HEK293T (cell line): ENCODE measurements at regions of chr13 and their contacts with region 1.

Region 1: DNA sequence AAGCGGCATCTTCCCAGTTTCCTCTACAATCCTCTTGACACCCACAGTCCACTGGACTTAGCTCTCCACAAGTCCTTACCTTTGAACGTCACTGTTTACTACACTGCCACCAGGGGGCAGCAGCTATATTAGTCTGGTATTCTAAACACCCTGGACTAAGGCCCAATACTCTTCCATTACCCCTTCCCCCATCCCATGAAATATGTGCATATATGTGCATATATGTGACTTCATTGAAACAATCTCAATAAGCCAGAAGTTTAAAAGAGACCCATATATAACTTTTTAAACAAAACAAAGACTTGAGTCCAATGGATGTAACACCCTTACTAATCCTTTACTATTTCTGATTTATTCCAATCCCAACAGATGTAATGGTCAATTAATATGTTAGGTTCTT is 15.5 kb downstream of the GGACT start:
- DNase-seq: peak; percentile 67

Region 2: DNA sequence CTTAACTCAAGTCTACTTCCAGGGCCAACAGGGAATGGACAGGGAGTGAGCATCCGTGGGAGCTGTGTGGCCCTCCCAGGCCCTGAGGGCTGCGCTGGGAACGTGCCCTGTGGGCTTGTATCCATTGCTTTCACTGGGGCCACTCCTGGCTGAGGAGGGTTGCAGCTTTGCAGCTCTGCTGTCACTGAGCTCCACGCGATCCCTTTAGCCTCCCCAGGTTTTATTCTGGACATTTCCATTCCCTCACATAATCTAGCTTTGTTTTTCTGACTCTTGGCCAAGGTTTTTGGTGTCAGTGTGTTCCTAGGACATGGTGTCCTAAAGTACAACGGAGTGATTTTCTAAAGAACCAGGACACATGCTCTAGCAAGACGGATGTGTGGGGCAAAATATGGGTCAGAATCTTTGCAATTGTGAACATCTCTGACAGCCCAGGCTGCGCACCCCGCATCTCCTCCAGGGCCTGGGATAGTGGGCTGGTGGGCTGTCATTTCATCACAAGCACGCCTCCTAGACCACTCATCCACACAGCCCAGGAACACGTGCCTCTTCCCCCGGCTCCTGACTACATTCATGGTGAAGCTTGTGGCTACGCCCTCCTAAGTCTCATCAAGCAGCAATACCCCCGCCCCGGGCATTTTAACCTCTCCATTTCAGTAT is 12.5 kb before region 1 on chr13:
- CTCF ChIA-PET with region 1: interaction called, 13 read pairs
- POLR2A ChIA-PET with region 1: no interaction called
- DNase-seq: no peak

Region 3: DNA sequence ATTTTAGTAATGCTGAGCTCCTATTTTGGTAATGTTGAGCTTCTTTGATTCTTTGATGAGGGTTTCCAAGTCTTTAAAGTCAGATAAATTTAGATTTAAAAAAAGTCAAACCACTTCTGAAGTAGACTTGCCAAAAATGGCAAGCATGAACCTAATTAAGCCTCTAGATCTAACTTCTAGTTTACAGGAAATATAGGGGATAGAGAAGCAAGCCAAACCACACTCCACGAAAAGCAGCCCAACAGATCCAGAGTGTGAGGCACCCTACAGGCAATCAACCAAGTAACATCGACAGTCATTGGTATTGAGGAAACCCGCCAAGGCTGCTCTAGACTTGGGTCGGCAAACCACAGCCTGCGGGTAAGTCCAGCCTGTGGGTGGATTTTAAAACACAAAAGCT is 11.8 kb after region 1 on chr13:
- CTCF ChIA-PET with region 1: interaction called, 10 read pairs
- POLR2A ChIA-PET with region 1: no interaction called
- DNase-seq: no peak

Region 4: GRCh38 chr13:100808330-100809266 is 235.5 kb after region 1 on chr13:
- CTCF ChIA-PET with region 1: no interaction called
- POLR2A ChIA-PET with region 1: no interaction called
- DNase-seq: no peak

Region 5: DNA sequence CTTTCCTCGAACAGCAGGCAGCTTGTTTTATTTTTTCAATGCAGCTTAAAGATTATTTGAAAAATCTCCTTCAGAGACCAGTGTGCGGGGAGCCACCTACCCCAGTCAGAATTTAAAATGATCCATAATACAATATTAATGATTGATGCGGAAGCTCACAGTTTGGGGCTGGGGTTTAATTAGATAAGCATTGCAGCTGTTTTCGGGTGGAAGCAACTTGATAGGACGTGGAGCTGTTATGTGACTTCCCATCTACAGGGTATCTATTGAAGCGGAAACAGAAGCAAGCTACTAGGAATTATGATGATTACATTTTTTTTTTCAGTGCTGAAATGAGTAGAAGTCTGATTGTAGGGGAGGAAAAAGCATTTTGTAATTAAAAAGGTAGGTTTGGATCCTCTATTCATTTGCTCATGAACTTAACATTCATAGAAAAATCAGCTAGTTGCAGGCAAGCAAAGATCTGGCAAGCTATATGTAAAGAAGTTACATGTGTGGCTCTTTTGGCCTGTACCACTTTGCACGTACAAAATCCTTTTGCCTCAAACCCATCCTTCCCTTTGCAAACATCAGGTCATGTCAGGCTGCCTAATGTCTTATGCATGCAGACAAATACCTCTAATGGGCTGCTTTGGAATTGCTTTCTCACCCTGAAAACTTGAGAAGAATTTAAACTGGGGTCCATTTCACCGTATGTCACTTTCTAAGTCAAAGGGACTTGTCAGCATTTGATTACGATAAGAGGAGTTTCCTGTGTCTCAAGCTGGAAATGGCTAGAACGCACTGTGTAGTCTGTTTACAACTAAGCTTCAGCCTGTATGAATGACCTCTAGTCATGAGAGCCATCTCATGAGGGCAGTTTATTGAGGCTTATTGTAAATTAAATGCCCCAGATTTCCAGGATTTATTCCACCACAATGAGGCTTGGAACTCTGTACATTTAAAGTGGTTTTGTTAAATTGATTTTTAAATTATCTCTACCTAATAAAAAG is 368.6 kb after region 1 on chr13:
- CTCF ChIA-PET with region 1: no interaction called
- POLR2A ChIA-PET with region 1: no interaction called
- DNase-seq: no peak